ENCODE measurements at regions of chr9 and their contacts with region 1.

Region 1: GRCh38 chr9:116149844-116150243 is 3.7 kb upstream of the PAPPA start:
- DNase-seq: peak; percentile 40 to 52
- H3K4me3 ChIP-seq: no peak overlapping the region
- H3K4me3 Mint-ChIP-seq: no peak overlapping the region
- H3K27ac Mint-ChIP-seq: no peak overlapping the region
- H3K4me1 ChIP-seq: no peaks in the 10 kb centered on the region
- H3K4me1 Mint-ChIP-seq: peaks cover 12% of the 10 kb centered on the region
- H3K27me3 ChIP-seq: peaks cover 2% of the 10 kb centered on the region
- H3K27me3 Mint-ChIP-seq: peaks cover 20% of the 10 kb centered on the region
- CTCF ChIP-seq: peak; percentile 70 to 75

Region 2: GRCh38 chr9:115883457-115884329 is 266.2 kb before region 1 on chr9:
- CTCF ChIA-PET with region 1: no interaction called
- POLR2A ChIA-PET with region 1: no interaction called
- intact Hi-C with region 1: loop called (anchors 5 kb)
- DNase-seq: peak; percentile 37 to 42
- H3K4me3 ChIP-seq: no peak overlapping the region
- H3K4me3 Mint-ChIP-seq: no peak overlapping the region
- H3K27ac Mint-ChIP-seq: no peak overlapping the region
- H3K4me1 ChIP-seq: no peaks in the 10 kb centered on the region
- H3K4me1 Mint-ChIP-seq: no peaks in the 10 kb centered on the region
- H3K27me3 ChIP-seq: no peaks in the 10 kb centered on the region
- H3K27me3 Mint-ChIP-seq: peaks cover 12% of the 10 kb centered on the region
- CTCF ChIP-seq: peak; percentile 63 to 67

Region 3: GRCh38 chr9:116494815-116495634 is 345.2 kb after region 1 on chr9:
- CTCF ChIA-PET with region 1: no interaction called
- POLR2A ChIA-PET with region 1: no interaction called
- intact Hi-C with region 1: loop called (anchors 10 kb)
- DNase-seq: peak in 1 of 2 experiments; percentile 30
- H3K4me3 ChIP-seq: no peak overlapping the region
- H3K4me3 Mint-ChIP-seq: no peak overlapping the region
- H3K27ac Mint-ChIP-seq: no peak overlapping the region
- H3K4me1 ChIP-seq: peaks cover 6% of the 10 kb centered on the region
- H3K4me1 Mint-ChIP-seq: peaks cover 5% of the 10 kb centered on the region
- H3K27me3 ChIP-seq: no peaks in the 10 kb centered on the region
- H3K27me3 Mint-ChIP-seq: no peaks in the 10 kb centered on the region
- CTCF ChIP-seq: peak; percentile 41 to 64

Measured in Caco-2 (cell line).